T-cell (primary cell): ENCODE measurements at regions of chr6 and their contacts with region 1.

Region 1: DNA sequence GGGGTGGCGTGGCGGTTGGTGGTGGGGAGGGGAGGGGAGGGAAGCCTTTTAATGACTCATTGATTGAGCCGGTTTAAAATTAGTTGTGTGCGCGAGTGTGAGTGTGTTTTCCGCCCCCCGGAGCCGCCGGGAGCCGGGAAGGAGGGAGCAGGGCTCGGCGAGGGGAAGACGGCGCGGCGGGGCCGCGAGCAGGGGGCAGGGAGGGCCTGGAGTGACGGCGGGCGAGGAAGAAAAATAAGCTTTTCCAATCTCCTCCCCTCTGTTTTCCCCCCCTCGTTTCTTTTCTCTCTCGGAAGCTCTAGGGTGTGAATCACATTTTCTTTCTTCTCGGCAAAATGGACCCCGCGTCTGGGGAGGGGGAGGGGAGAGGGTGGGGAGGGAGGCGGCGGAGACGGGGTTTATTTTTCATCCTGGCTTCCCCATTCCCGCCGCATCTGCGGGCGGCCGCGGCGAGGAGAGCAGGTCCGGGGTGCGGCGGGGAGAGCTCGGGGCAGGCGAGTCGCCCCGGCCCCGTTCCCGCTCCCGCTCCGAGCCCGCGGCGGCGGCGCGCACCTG is 847 bp downstream of the BICRAL start:
- DNase-seq: peak; percentile 64 to 85 (median 79)
- ATAC-seq: peak; percentile 65 to 71 (median 66)
- H3K4me3 ChIP-seq: peak overlapping the region; percentile 64 to 97
- H3K4me3 Mint-ChIP-seq: peak overlapping the region in 2 of 3 donors; percentile 97
- H3K27ac ChIP-seq: peak overlapping the region; percentile 99
- H3K27ac Mint-ChIP-seq: peak overlapping the region; percentile 99 to 100
- H3K4me1 ChIP-seq: peaks cover 31 to 37% of the 10 kb centered on the region in 2 experiments
- H3K4me1 Mint-ChIP-seq: peaks cover 29 to 34% (median 31%) of the 10 kb centered on the region in 3 donors
- H3K27me3 ChIP-seq: no peaks in the 10 kb centered on the region
- H3K27me3 Mint-ChIP-seq: no peaks in the 10 kb centered on the region

Region 2: DNA sequence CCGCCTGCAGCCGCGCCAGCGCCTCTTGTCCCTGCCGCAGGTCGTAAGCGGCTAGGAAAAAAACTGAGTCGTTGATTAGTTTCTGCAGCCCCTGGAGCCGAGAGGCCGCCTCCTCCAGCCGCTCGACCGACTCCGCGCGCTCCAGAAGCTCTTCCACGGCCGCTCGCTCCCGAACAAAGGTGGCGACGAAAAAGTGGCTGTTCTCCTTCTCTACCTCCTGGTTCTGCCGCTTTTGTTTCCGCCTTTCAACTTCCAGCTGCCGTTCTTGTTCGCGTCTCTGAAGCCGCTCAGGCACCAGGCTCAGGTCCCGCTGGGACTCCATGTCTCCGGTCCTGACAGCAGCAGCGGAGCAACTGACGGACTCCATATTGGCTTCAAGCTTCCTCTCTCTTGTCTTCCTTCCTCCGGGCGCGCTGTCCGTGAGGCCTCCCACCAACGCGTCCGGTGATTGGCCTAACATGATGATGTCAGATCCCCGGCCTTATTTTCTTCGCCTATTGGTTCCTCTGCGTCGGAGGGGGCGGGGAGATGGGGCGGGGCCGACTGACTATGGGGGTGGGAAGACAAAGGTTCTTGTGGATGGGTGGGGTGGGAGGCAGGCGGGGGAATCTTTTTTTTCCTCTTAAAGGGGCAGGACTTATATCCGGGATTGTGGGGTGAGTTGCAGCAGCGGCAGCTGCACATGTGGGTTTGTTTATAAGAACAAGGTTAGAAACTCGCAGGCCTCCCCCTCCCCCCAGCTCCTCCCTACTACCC is 36.8 kb before region 1 on chr6 and contains the start of gene TBCC:
- CTCF ChIA-PET with region 1: interaction called, 4 read pairs
- POLR2A ChIA-PET with region 1: interaction called, 5 to 101 read pairs
- DNase-seq: peak in 34 of 35 experiments; percentile 84 to 98 (median 94)
- ATAC-seq: peak; percentile 74 to 81 (median 76)
- H3K4me3 ChIP-seq: peak within 1 kb of the TSS; percentile 77 to 100
- H3K4me3 Mint-ChIP-seq: peak within 1 kb of the TSS; percentile 89 to 100 (median 100)
- H3K27ac ChIP-seq: peak within 1 kb of the TSS; percentile 92
- H3K27ac Mint-ChIP-seq: peak within 1 kb of the TSS; percentile 100
- H3K4me1 ChIP-seq: peaks cover 12 to 46% of the 10 kb centered on the region in 2 experiments
- H3K4me1 Mint-ChIP-seq: peaks cover 27 to 37% (median 33%) of the 10 kb centered on the region in 3 donors
- H3K27me3 ChIP-seq: peaks cover 0 to 2% of the 10 kb centered on the region in 2 experiments
- H3K27me3 Mint-ChIP-seq: no peaks in the 10 kb centered on the region
- total RNA-seq, gene TBCC: 56.5 to 74.8 (median 59.4) TPM

Region 3: DNA sequence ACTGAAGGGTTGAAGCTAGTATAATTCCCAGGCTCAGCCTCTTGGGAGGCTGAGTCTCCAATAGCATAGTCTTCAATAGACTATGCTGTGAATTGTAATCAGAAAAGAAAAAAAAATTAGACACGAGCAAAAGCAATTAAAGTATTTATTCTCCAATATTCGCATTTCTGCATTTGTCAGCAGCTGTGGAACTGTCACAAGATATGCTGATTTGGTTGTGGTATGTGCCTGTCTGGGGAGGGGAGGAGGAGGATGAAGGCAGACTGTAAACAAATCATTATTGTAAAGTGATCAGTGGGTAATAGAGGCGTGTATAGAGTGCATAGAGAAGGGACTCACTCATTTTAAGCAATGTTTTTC is 11.0 kb before region 1 on chr6:
- CTCF ChIA-PET with region 1: interaction called, 13 to 17 read pairs
- POLR2A ChIA-PET with region 1: interaction called, 12 to 133 read pairs
- DNase-seq: peak in 29 of 35 experiments; percentile 13 to 73 (median 36)
- ATAC-seq: peak; percentile 15 to 23 (median 16)
- H3K4me3 ChIP-seq: peak overlapping the region in 1 of 2 donors; percentile 31
- H3K4me3 Mint-ChIP-seq: peak overlapping the region; percentile 64 to 75 (median 75)
- H3K27ac ChIP-seq: peak overlapping the region; percentile 99
- H3K27ac Mint-ChIP-seq: peak overlapping the region; percentile 100
- H3K4me1 ChIP-seq: peaks cover 45 to 72% of the 10 kb centered on the region in 2 experiments
- H3K4me1 Mint-ChIP-seq: peaks cover 68 to 83% (median 81%) of the 10 kb centered on the region in 3 donors
- H3K27me3 ChIP-seq: no peaks in the 10 kb centered on the region
- H3K27me3 Mint-ChIP-seq: no peaks in the 10 kb centered on the region

Region 4: DNA sequence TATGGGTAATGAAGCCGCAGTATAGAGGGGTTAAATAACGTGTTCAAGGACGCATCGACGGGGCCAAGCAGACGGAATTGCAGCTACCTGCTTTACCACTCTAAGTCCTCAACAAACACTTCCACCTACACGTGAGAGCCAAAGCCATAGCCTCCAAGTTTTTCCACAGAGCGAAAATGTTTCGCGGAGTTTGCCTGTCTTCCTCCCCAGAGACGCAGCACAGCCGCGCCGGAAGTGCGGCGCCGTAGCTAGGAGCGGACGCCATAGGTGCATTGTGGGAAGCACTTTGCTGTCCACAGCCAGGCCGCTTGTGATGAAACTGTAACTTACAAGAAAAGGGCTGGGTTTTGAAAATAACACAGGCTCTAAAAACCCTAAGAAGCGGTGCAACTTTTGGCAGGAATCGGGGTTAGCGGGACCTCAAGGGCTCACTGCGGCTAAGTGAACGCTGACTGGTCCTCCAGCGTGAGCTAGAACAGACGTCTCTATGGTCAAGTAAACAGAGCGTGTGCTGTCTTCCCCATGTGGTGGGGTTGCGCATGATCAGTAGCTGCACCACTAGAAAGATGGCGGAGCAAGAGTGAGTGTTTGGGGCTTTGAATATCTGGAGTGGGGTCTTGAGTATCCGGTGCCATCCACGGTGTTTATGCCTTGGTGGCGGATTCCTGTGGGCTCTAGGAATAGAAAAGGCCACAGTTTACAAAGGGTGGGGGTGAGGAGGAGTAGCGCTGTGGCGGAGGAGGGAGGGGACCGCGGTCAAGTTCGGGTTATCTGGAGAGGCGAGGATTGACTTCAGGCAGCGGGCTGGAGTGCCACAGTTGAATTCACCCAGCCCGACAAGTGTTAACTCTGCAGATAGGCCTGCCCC is 96.9 kb after region 1 on chr6 and contains the start of gene RPL7L1:
- CTCF ChIA-PET with region 1: interaction called in 1 of 2 experiments, 4 read pairs
- POLR2A ChIA-PET with region 1: interaction called, 7 to 11 read pairs
- DNase-seq: peak; percentile 74 to 89 (median 80)
- ATAC-seq: peak; percentile 91 to 94 (median 93)
- H3K4me3 ChIP-seq: peak within 1 kb of the TSS; percentile 60 to 72
- H3K4me3 Mint-ChIP-seq: peak within 1 kb of the TSS; percentile 95 to 100 (median 96)
- H3K27ac ChIP-seq: peak within 1 kb of the TSS; percentile 81
- H3K27ac Mint-ChIP-seq: peak within 1 kb of the TSS; percentile 98 to 100
- H3K4me1 ChIP-seq: peaks cover 0 to 32% of the 10 kb centered on the region in 2 experiments
- H3K4me1 Mint-ChIP-seq: peaks cover 21 to 36% (median 27%) of the 10 kb centered on the region in 3 donors
- H3K27me3 ChIP-seq: no peaks in the 10 kb centered on the region
- H3K27me3 Mint-ChIP-seq: no peaks in the 10 kb centered on the region
- total RNA-seq, gene RPL7L1: 62.5 to 89.2 (median 81.3) TPM

Region 5: GRCh38 chr6:43096451-43097097 is 313.9 kb after region 1 on chr6:
- CTCF ChIA-PET with region 1: no interaction called
- POLR2A ChIA-PET with region 1: no interaction called
- DNase-seq: no peak
- ATAC-seq: no peak
- H3K4me3 ChIP-seq: no peak overlapping the region
- H3K4me3 Mint-ChIP-seq: no peak overlapping the region
- H3K27ac ChIP-seq: no peak overlapping the region
- H3K27ac Mint-ChIP-seq: no peak overlapping the region
- H3K4me1 ChIP-seq: no peaks in the 10 kb centered on the region
- H3K4me1 Mint-ChIP-seq: peaks cover 14 to 19% (median 17%) of the 10 kb centered on the region in 3 donors
- H3K27me3 ChIP-seq: peaks cover 0 to 2% of the 10 kb centered on the region in 2 experiments
- H3K27me3 Mint-ChIP-seq: peaks cover 0 to 2% of the 10 kb centered on the region in 2 donors